ENCODE measurements at regions of chr10 and their contacts with region 1.

Region 1: GRCh38 chr10:17029581-17030271 is 99.9 kb downstream of the CUBN start:
- DNase-seq: peak; percentile 94
- H3K4me3 Mint-ChIP-seq: peak overlapping the region; percentile 61
- H3K27ac Mint-ChIP-seq: peak overlapping the region; percentile 83
- H3K4me1 Mint-ChIP-seq: peaks cover 69% of the 10 kb centered on the region
- H3K27me3 Mint-ChIP-seq: no peaks in the 10 kb centered on the region

Region 2: GRCh38 chr10:16195178-16195769 is 834.5 kb before region 1 on chr10:
- CTCF ChIA-PET with region 1: no interaction called
- intact Hi-C with region 1: loop called (anchors 5 kb)
- DNase-seq: peak; percentile 9
- H3K4me3 Mint-ChIP-seq: no peak overlapping the region
- H3K27ac Mint-ChIP-seq: peak overlapping the region; percentile 13
- H3K4me1 Mint-ChIP-seq: peaks cover 11% of the 10 kb centered on the region
- H3K27me3 Mint-ChIP-seq: peaks cover 6% of the 10 kb centered on the region

Region 3: DNA sequence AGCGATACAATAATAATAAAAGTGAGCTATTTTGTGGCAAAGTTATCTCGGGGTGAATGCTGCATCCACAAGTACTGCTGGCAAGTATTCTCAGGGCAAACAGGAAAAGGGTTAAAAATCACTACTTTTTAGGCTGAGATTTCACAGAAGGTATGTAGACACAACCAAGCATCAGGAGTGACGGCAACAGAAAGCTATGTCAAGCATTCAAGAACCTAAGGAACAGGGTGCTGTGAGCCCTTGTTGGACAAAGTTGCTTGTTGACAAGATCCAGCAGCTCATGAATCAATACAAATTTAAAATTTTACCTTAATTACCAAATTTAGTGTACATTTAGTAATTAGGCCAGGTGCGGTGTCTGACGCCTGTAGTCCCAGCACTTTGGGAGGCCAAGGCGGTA is 466.8 kb before region 1 on chr10:
- CTCF ChIA-PET with region 1: no interaction called
- intact Hi-C with region 1: no loop called
- DNase-seq: no peak
- H3K4me3 Mint-ChIP-seq: no peak overlapping the region
- H3K27ac Mint-ChIP-seq: no peak overlapping the region
- H3K4me1 Mint-ChIP-seq: no peaks in the 10 kb centered on the region
- H3K27me3 Mint-ChIP-seq: peaks cover 39% of the 10 kb centered on the region

Region 4: GRCh38 chr10:16950656-16951601 is 78.8 kb before region 1 on chr10:
- CTCF ChIA-PET with region 1: no interaction called
- intact Hi-C with region 1: no loop called
- DNase-seq: peak; percentile 58
- H3K4me3 Mint-ChIP-seq: no peak overlapping the region
- H3K27ac Mint-ChIP-seq: no peak overlapping the region
- H3K4me1 Mint-ChIP-seq: peaks cover 11% of the 10 kb centered on the region
- H3K27me3 Mint-ChIP-seq: no peaks in the 10 kb centered on the region

Region 5: GRCh38 chr10:17061418-17061817 is 31.7 kb after region 1 on chr10:
- CTCF ChIA-PET with region 1: interaction called, 3 read pairs
- intact Hi-C with region 1: loop called (anchors 2 kb)
- DNase-seq: no peak
- H3K4me3 Mint-ChIP-seq: no peak overlapping the region
- H3K27ac Mint-ChIP-seq: no peak overlapping the region
- H3K4me1 Mint-ChIP-seq: peaks cover 37% of the 10 kb centered on the region
- H3K27me3 Mint-ChIP-seq: no peaks in the 10 kb centered on the region

Measured in activated naive CD4-positive, alpha-beta T cell treated with anti-CD3 and anti-CD28 coated beads for 36 hours (primary cell).